Activated CD4-positive, alpha-beta T cell treated with anti-CD3 and anti-CD28 coated beads for 36 hours (primary cell): ENCODE measurements at regions of chr5 and their contacts with region 1.

Region 1: GRCh38 chr5:139273572-139274289 is 19.8 kb upstream of the MATR3 start:
- DNase-seq: peak; percentile 95
- ATAC-seq: peak; percentile 90
- H3K4me3 Mint-ChIP-seq: peak overlapping the region; percentile 95
- H3K27ac Mint-ChIP-seq: peak overlapping the region; percentile 88
- H3K4me1 Mint-ChIP-seq: peaks cover 54% of the 10 kb centered on the region
- H3K27me3 Mint-ChIP-seq: no peaks in the 10 kb centered on the region

Region 2: GRCh38 chr5:138654281-138654867 is 619.4 kb before region 1 on chr5:
- CTCF ChIA-PET with region 1: no interaction called
- POLR2A ChIA-PET with region 1: no interaction called
- intact Hi-C with region 1: loop called (anchors 5 kb)
- DNase-seq: peak; percentile 81
- ATAC-seq: peak; percentile 97
- H3K4me3 Mint-ChIP-seq: no peak overlapping the region
- H3K27ac Mint-ChIP-seq: peak overlapping the region; percentile 28
- H3K4me1 Mint-ChIP-seq: peaks cover 24% of the 10 kb centered on the region
- H3K27me3 Mint-ChIP-seq: peaks cover 72% of the 10 kb centered on the region

Region 3: GRCh38 chr5:139246394-139246793 is 27.3 kb before region 1 on chr5:
- CTCF ChIA-PET with region 1: interaction called, 5 read pairs
- POLR2A ChIA-PET with region 1: interaction called, 3 read pairs
- intact Hi-C with region 1: loop called in 1 of 2 experiments (anchors 2 kb)
- DNase-seq: peak; percentile 84
- ATAC-seq: peak; percentile 100
- H3K4me3 Mint-ChIP-seq: no peak overlapping the region
- H3K27ac Mint-ChIP-seq: peak overlapping the region; percentile 75
- H3K4me1 Mint-ChIP-seq: peaks cover 24% of the 10 kb centered on the region
- H3K27me3 Mint-ChIP-seq: peaks cover 2% of the 10 kb centered on the region

Region 4: DNA sequence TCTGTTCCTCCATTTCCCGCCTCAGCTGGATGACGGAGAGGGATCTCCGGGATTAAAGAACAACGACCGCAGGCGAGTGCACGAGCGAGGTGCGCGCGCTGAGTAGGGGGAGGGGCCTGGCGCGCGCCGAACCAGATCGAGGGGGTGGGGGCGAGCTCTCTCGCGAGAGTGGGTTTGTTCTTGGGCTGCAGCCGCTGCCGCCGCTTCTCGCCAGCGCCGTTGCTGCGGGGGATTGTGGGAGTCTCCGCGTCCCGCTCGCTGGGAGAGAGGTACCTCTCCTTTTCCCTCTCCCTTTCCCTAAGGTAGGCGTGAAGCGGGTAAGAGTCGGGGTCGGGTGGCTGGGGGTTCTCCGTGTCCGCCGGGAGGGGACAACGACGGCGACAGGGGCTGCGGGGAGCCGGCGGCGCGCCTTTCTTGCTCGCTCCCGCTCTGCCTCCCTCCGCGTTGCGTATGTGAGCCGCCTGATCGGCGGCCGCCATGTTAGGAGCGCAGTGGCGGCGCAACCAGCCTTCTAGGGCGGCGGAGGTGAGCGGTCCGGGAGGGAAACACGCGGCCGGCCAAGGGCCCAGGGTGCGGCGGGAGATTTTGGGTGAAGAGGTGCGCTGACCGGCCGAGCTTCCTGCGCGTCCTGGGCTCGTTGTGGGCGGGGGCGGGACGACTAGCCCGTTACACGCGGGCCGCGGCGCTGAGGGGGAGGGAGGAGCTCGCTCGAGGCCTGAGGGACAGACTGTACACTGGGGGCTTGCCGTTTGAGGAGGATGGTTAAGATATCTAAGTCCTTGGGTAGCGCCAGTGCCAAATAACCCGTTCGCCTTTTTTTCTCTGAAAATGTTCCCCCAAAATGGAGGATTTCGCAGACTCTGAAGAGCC is 20.0 kb after region 1 on chr5 and contains the start of gene MATR3:
- CTCF ChIA-PET with region 1: no interaction called
- POLR2A ChIA-PET with region 1: interaction called, 6 read pairs
- intact Hi-C with region 1: loop called (anchors 1 to 2 kb)
- DNase-seq: peak; percentile 98
- ATAC-seq: peak; percentile 92
- H3K4me3 Mint-ChIP-seq: peak within 1 kb of the TSS; percentile 97
- H3K27ac Mint-ChIP-seq: peak within 1 kb of the TSS; percentile 99
- H3K4me1 Mint-ChIP-seq: peaks cover 37% of the 10 kb centered on the region
- H3K27me3 Mint-ChIP-seq: no peaks in the 10 kb centered on the region
- total RNA-seq, gene MATR3: 113 to 133 TPM

Region 5: DNA sequence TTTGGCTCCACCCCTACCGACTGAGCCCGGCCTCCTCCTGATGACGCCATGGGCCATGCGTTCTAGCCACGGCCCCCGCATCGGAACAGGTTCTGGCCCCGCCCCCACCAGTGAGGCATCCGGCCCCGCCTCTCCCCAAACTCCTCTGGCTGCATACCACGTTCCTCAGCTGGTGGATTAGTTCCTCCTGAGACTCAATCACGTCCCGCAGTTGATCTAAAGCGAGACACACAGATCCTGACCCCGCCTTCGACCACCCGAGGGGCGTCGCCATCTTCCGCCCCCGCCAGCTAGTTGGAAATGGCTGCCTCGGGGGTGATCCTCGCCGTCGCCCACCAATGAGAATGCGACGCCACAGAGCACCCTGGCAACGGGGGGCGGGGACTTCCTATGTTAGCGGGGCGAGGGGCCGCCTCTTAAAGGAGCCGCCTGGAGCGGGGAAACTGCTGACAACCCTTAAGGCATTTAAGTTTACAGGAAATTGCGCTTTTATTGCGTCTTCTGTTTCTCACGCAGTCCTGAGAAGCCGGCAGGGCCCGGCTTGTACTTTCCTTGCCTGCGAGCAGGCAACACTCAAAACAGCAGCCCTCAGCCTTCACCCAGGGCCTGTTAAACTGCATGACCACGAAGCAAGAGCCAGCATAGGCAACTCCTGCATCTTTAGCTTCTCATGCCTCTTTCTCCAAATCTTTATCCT is 130.2 kb after region 1 on chr5 and contains the start of gene SPATA24:
- CTCF ChIA-PET with region 1: no interaction called
- POLR2A ChIA-PET with region 1: no interaction called
- intact Hi-C with region 1: loop called in 1 of 2 experiments (anchors 1 kb)
- DNase-seq: peak; percentile 100
- ATAC-seq: peak; percentile 93
- H3K4me3 Mint-ChIP-seq: peak within 1 kb of the TSS; percentile 79
- H3K27ac Mint-ChIP-seq: peak within 1 kb of the TSS; percentile 99
- H3K4me1 Mint-ChIP-seq: peaks cover 37% of the 10 kb centered on the region
- H3K27me3 Mint-ChIP-seq: no peaks in the 10 kb centered on the region
- total RNA-seq, gene SPATA24: 4.6 to 5.9 TPM